ENCODE measurements at regions of chr10 and their contacts with region 1.

Region 1: GRCh38 chr10:29496341-29497162 is 138.2 kb downstream of the SVIL start:
- DNase-seq: peak in 8 of 9 donors; percentile 12 to 77 (median 32)
- ATAC-seq: peak; percentile 83
- H3K4me3 ChIP-seq: no peak overlapping the region
- H3K4me3 Mint-ChIP-seq: no peak overlapping the region
- H3K27ac ChIP-seq: no peak overlapping the region
- H3K27ac Mint-ChIP-seq: no peak overlapping the region
- H3K4me1 ChIP-seq: no peaks in the 10 kb centered on the region
- H3K4me1 Mint-ChIP-seq: peaks cover 0 to 5% (median 0%) of the 10 kb centered on the region in 7 donors
- H3K27me3 ChIP-seq: no peaks in the 10 kb centered on the region
- H3K27me3 Mint-ChIP-seq: no peaks in the 10 kb centered on the region

Region 2: DNA sequence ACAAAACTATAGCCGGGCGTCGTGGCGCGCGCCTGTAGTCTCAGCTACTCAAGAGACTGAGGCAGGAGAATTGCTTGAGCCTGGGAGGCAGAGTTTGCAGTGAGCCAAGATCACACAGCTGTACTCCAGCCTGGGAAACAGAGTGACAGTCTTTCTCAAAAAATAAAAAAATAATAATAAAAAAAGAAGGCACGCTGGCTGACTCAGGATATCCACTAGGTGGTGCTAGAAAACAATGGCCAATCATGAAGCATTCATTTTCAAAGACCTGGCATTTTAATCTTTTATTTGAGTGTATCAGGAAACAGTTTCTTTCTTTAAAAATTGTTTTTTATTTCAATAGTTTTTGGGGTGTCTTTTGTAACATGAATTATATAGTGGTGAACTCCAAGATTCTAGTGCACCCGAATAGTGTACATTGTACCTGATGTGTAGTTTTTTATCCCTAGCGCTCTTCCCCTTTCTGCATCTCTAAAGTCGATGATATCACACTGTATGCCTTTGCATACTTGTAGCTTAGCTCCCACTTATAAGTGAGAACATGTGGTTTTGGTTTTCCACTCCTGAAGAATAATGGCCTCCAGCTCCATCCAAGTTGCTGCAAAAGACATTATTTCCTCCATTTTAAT is 119.1 kb before region 1 on chr10:
- CTCF ChIA-PET with region 1: no interaction called
- POLR2A ChIA-PET with region 1: no interaction called
- intact Hi-C with region 1: loop called (anchors 2 kb)
- DNase-seq: peak in 4 of 9 donors; percentile 6 to 25 (median 14)
- ATAC-seq: no peak
- H3K4me3 ChIP-seq: no peak overlapping the region
- H3K4me3 Mint-ChIP-seq: no peak overlapping the region
- H3K27ac ChIP-seq: no peak overlapping the region
- H3K27ac Mint-ChIP-seq: no peak overlapping the region
- H3K4me1 ChIP-seq: no peaks in the 10 kb centered on the region
- H3K4me1 Mint-ChIP-seq: peaks cover 2 to 12% (median 8%) of the 10 kb centered on the region in 7 donors
- H3K27me3 ChIP-seq: peaks cover 0 to 3% of the 10 kb centered on the region in 2 donors
- H3K27me3 Mint-ChIP-seq: peaks cover 0 to 9% (median 3%) of the 10 kb centered on the region in 5 donors

Region 3: GRCh38 chr10:29386342-29386999 is 110.1 kb before region 1 on chr10:
- CTCF ChIA-PET with region 1: no interaction called
- POLR2A ChIA-PET with region 1: interaction called, 4 read pairs
- intact Hi-C with region 1: loop called (anchors 1 kb)
- DNase-seq: peak in 6 of 9 donors; percentile 5 to 40 (median 35)
- ATAC-seq: peak; percentile 67
- H3K4me3 ChIP-seq: no peak overlapping the region
- H3K4me3 Mint-ChIP-seq: no peak overlapping the region
- H3K27ac ChIP-seq: no peak overlapping the region
- H3K27ac Mint-ChIP-seq: no peak overlapping the region
- H3K4me1 ChIP-seq: no peaks in the 10 kb centered on the region
- H3K4me1 Mint-ChIP-seq: peaks cover 0 to 6% (median 0%) of the 10 kb centered on the region in 7 donors
- H3K27me3 ChIP-seq: peaks cover 0 to 3% of the 10 kb centered on the region in 2 donors
- H3K27me3 Mint-ChIP-seq: peaks cover 0 to 13% (median 5%) of the 10 kb centered on the region in 5 donors

Region 4: DNA sequence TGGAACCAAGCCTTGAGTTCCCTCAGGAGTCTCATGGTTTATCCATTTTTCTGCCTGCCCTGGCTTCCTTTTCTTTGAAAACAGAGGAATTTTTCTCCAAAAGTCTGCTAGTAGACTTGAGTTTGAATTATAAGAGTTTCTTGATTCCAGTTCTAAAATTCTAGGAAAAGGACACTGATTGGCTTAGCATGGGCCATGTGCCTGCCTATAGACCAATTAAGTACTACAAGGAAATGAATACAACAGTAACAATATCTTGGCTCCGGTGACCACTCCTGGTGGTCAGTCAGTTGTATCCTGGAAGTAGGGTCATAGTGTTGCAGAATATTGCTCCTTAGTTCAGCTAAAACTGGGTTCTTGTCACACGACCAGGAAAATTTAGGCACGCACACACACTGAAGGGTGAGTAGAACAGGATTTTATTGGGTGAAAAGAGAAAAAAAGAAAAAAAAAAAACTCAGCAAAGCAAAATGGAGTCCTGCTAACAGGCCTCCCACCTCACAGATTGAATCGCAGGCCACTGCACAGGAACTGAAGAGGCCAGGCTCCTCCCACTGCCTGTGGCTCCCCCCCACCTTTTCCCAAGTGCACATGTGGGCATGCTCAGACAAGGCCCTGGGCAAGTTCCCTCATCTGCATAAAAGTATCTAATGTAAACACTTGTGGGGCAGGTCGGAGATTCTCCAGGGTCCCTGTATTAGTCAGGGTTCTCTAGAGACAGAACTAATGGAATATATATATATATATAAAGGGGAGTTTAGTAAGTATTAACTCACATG is 52.6 kb before region 1 on chr10:
- CTCF ChIA-PET with region 1: interaction called, 3 read pairs
- POLR2A ChIA-PET with region 1: no interaction called
- intact Hi-C with region 1: loop called (anchors 1 to 5 kb)
- DNase-seq: no peak
- ATAC-seq: no peak
- H3K4me3 ChIP-seq: no peak overlapping the region
- H3K4me3 Mint-ChIP-seq: no peak overlapping the region
- H3K27ac ChIP-seq: no peak overlapping the region
- H3K27ac Mint-ChIP-seq: no peak overlapping the region
- H3K4me1 ChIP-seq: no peaks in the 10 kb centered on the region
- H3K4me1 Mint-ChIP-seq: peaks cover 0 to 14% (median 4%) of the 10 kb centered on the region in 7 donors
- H3K27me3 ChIP-seq: no peaks in the 10 kb centered on the region
- H3K27me3 Mint-ChIP-seq: no peaks in the 10 kb centered on the region

Region 5: GRCh38 chr10:29479081-29479925 is 17.2 kb before region 1 on chr10:
- CTCF ChIA-PET with region 1: no interaction called
- POLR2A ChIA-PET with region 1: no interaction called
- intact Hi-C with region 1: no loop called
- DNase-seq: no peak
- ATAC-seq: no peak
- H3K4me3 ChIP-seq: no peak overlapping the region
- H3K4me3 Mint-ChIP-seq: no peak overlapping the region
- H3K27ac ChIP-seq: peak overlapping the region; percentile 35
- H3K27ac Mint-ChIP-seq: peak overlapping the region in 1 of 9 donors; percentile 28
- H3K4me1 ChIP-seq: peaks cover 0 to 6% of the 10 kb centered on the region in 2 donors
- H3K4me1 Mint-ChIP-seq: peaks cover 7 to 21% (median 16%) of the 10 kb centered on the region in 7 donors
- H3K27me3 ChIP-seq: no peaks in the 10 kb centered on the region
- H3K27me3 Mint-ChIP-seq: no peaks in the 10 kb centered on the region

Measured in naive thymus-derived CD4-positive, alpha-beta T cell (primary cell).